ENCODE measurements at regions of chr5 and their contacts with region 1.

Region 1: DNA sequence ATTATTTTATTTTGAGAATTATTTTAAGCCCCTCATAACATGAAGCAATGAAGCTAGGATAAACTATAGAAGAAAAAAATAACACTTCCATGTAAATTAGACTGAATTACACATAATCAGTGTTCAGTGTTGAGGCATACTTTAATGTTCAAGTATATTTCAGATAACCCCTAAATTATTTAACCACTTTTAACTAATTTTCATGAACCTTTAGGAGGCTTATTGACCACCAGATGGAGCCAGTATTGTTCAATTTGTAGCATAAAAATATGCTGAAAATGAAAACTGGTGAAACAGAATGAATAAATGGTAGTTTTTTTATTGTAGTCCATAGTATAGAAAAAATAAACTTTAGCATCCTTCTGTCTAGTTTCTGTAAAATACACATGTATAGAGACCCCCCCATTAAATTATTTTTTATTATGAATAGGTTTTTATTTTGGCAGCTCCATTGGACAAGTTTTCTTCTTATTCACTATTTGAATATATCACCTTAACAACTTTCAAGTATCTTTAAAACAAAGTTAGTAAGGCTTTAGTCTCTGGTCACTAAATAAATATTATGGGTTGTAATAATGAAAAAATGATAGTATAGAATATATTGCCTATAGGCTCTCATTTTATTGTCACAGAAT is 190.1 kb downstream of the CWC27 start:
- DNase-seq: peak; percentile 11
- ATAC-seq: no peak
- H3K4me3 ChIP-seq: no peak overlapping the region
- H3K27ac ChIP-seq: no peak overlapping the region
- H3K4me1 ChIP-seq: no peaks in the 10 kb centered on the region
- H3K27me3 ChIP-seq: no peaks in the 10 kb centered on the region
- CTCF ChIP-seq: peak; percentile 20
- EP300 ChIP-seq: no peak
- POLR2A ChIP-seq: no peak
- RAD21 ChIP-seq: no peak

Region 2: DNA sequence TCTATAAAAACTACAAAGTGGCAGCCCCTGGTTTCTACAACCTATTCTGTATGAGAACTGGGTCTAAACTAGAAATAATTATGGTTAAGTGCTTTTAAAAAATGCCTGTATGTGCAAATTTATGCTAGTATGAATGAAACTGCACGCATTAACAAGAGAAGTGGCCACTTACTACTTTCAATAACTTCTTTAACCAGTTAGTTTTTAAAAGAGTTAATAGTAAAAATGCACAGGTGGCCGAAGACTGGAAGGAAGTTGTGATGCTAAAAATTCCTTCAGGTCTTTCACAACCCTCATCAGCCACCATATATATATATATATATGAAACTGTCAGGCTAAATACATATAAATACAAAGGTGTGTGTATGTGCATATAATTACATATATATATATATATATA is 231.7 kb before region 1 on chr5:
- CTCF ChIA-PET with region 1: no interaction called
- POLR2A ChIA-PET with region 1: no interaction called
- in situ Hi-C with region 1: no loop called
- intact Hi-C with region 1: no loop called
- DNase-seq: no peak
- ATAC-seq: no peak
- H3K4me3 ChIP-seq: no peak overlapping the region
- H3K27ac ChIP-seq: no peak overlapping the region
- H3K4me1 ChIP-seq: no peaks in the 10 kb centered on the region
- H3K27me3 ChIP-seq: no peaks in the 10 kb centered on the region
- CTCF ChIP-seq: no peak
- EP300 ChIP-seq: no peak
- POLR2A ChIP-seq: no peak
- RAD21 ChIP-seq: no peak

Region 3: GRCh38 chr5:64900618-64901017 is 58.3 kb before region 1 on chr5:
- CTCF ChIA-PET with region 1: no interaction called
- POLR2A ChIA-PET with region 1: no interaction called
- in situ Hi-C with region 1: no loop called
- intact Hi-C with region 1: no loop called
- DNase-seq: peak; percentile 62
- ATAC-seq: peak; percentile 70
- H3K4me3 ChIP-seq: no peak overlapping the region
- H3K27ac ChIP-seq: no peak overlapping the region
- H3K4me1 ChIP-seq: no peaks in the 10 kb centered on the region
- H3K27me3 ChIP-seq: no peaks in the 10 kb centered on the region
- CTCF ChIP-seq: no peak
- EP300 ChIP-seq: no peak
- POLR2A ChIP-seq: no peak
- RAD21 ChIP-seq: no peak

Region 4: GRCh38 chr5:65035211-65036206 is 76.6 kb after region 1 on chr5:
- CTCF ChIA-PET with region 1: no interaction called
- POLR2A ChIA-PET with region 1: no interaction called
- in situ Hi-C with region 1: no loop called
- intact Hi-C with region 1: loop called (anchors 2 kb)
- DNase-seq: peak; percentile 68
- ATAC-seq: peak; percentile 93
- H3K4me3 ChIP-seq: peak overlapping the region; percentile 62 to 77 (median 71)
- H3K27ac ChIP-seq: peak overlapping the region; percentile 20
- H3K4me1 ChIP-seq: peaks cover 36% of the 10 kb centered on the region
- H3K27me3 ChIP-seq: no peaks in the 10 kb centered on the region; a peak in 2 of 5 replicates
- CTCF ChIP-seq: no peak
- EP300 ChIP-seq: no peak
- POLR2A ChIP-seq: peak; percentile 30 to 47; a peak in 3 of 4 replicates
- RAD21 ChIP-seq: 0 out of 2 replicates have a peak, but pooled peaks have one; percentile 8

Region 5: DNA sequence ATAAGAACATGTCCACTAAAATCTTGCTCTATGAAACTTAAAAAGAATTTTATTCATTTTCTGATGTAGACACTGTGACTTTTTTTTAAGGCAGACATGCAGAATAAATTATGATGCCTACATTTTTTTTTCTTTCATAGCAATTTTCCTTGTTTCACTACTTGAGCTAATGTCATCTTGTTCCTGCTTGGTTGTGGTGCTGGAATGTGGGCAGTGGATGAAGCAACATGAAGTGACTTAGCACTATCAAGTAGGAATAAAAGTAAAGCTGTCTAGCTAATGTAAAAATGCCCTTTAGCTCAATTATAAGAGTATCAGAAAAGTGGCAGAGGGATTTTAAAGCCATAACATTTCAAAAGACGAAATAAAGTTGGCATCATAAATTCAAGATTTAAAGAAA is 331.8 kb after region 1 on chr5:
- CTCF ChIA-PET with region 1: no interaction called
- POLR2A ChIA-PET with region 1: no interaction called
- in situ Hi-C with region 1: no loop called
- intact Hi-C with region 1: no loop called
- DNase-seq: no peak
- ATAC-seq: no peak
- H3K4me3 ChIP-seq: no peak overlapping the region
- H3K27ac ChIP-seq: no peak overlapping the region
- H3K4me1 ChIP-seq: peaks cover 11% of the 10 kb centered on the region
- H3K27me3 ChIP-seq: no peaks in the 10 kb centered on the region; a peak in 1 of 5 replicates
- CTCF ChIP-seq: no peak
- EP300 ChIP-seq: no peak
- POLR2A ChIP-seq: no peak
- RAD21 ChIP-seq: no peak

Region 6: GRCh38 chr5:66661149-66661548 is 1702.3 kb after region 1 on chr5:
- CTCF ChIA-PET with region 1: no interaction called
- POLR2A ChIA-PET with region 1: no interaction called
- in situ Hi-C with region 1: no loop called
- intact Hi-C with region 1: no loop called
- DNase-seq: no peak
- ATAC-seq: no peak
- H3K4me3 ChIP-seq: no peak overlapping the region
- H3K27ac ChIP-seq: no peak overlapping the region
- H3K4me1 ChIP-seq: no peaks in the 10 kb centered on the region
- H3K27me3 ChIP-seq: no peaks in the 10 kb centered on the region
- CTCF ChIP-seq: no peak
- EP300 ChIP-seq: no peak
- POLR2A ChIP-seq: no peak
- RAD21 ChIP-seq: no peak

Measured in HepG2 (cell line).